PC-3 (cell line): ENCODE measurements at regions of chr20 and their contacts with region 1.

Region 1: GRCh38 chr20:45138561-45139300 is 14.5 kb upstream of the WFDC12 start:
- DNase-seq: peak; percentile 86
- ATAC-seq: peak; percentile 96
- H3K4me3 ChIP-seq: peak overlapping the region; percentile 20; the same call in 1 of the 2 replicates
- H3K27ac ChIP-seq: peak overlapping the region; percentile 27
- H3K4me1 ChIP-seq: peaks cover 19% of the 10 kb centered on the region
- H3K27me3 ChIP-seq: no peaks in the 10 kb centered on the region
- CTCF ChIP-seq: peak; percentile 99

Region 2: DNA sequence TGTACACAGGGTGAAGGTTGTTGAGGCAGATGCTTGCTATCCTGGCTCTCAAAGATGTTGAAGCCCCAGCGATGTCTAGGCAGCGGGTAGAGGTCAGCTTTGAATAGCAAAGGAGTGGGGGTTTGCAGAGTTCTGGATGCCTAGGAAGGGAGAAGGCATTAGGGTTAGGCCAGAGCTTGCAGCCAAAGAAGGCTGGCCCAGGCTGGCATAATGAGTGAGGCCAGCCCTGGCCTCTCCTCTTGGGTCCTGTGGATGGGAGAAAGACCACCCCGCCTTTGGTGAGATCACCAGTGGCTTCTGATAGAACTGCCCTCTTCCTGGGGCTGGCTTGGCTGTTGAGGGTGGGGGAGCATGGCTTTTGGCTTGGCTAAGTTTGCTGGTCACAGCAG is 23.4 kb before region 1 on chr20:
- CTCF ChIA-PET with region 1: interaction called, 13 read pairs
- POLR2A ChIA-PET with region 1: no interaction called
- intact Hi-C with region 1: no loop called
- DNase-seq: no peak
- ATAC-seq: no peak
- H3K4me3 ChIP-seq: no peak overlapping the region
- H3K27ac ChIP-seq: no peak overlapping the region
- H3K4me1 ChIP-seq: no peaks in the 10 kb centered on the region
- H3K27me3 ChIP-seq: no peaks in the 10 kb centered on the region
- CTCF ChIP-seq: no peak

Region 3: GRCh38 chr20:45124365-45124764 is 14.4 kb before region 1 on chr20 and contains the start of gene WFDC12:
- CTCF ChIA-PET with region 1: interaction called, 15 read pairs
- POLR2A ChIA-PET with region 1: interaction called, 4 read pairs
- intact Hi-C with region 1: no loop called
- DNase-seq: no peak
- ATAC-seq: no peak
- H3K4me3 ChIP-seq: no peak within 1 kb of the TSS
- H3K27ac ChIP-seq: no peak within 1 kb of the TSS
- H3K4me1 ChIP-seq: peaks cover 10% of the 10 kb centered on the region; the same call in 1 of the 2 replicates
- H3K27me3 ChIP-seq: no peaks in the 10 kb centered on the region
- CTCF ChIP-seq: no peak
- total RNA-seq, gene WFDC12: not detected in 2 replicates

Region 4: DNA sequence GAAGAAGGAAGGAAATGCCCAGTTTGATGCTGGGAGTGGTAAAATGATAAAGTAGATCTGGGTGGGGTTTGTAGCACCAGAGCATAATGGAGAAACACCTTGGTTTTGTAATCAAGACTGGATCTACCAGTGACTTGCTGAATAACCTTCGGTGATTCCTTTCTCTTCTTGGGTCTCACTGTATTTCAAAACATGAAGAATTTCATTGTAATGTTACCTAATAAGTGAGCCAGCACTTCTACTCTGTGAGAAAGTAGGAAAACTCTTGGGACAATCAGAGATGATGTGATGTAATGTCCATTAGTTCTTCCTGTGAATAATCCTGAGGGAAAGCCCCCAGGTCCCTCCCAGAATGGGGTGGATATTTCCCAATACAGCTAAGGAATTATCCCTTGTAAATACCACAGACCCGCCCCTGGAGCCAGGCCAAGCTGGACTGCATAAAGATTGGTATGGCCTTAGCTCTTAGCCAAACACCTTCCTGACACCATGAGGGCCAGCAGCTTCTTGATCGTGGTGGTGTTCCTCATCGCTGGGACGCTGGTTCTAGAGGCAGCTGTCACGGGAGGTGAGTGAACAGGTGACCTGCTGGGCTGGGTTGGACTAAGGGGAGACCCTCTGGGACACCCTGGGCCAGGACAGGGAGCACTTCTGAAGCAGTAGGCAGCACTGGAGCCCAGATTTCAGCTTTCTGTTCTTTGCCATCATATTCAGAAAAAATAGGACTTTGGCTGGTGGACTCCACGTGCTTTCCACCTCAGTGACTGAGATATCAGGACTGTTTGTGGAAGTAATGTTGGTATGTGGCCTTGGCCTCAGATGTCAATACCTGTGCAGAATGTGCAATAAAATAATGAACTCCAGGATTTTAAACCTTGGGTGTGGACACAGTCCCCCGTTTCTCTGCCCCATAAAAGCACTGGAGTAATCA is 36.0 kb after region 1 on chr20 and contains the start of gene PI3:
- CTCF ChIA-PET with region 1: interaction called, 7 read pairs
- POLR2A ChIA-PET with region 1: interaction called, 3 read pairs
- intact Hi-C with region 1: loop called (anchors 5 kb)
- DNase-seq: peak; percentile 99
- ATAC-seq: peak; percentile 66
- H3K4me3 ChIP-seq: peak within 1 kb of the TSS; percentile 8; the same call in 1 of the 2 replicates
- H3K27ac ChIP-seq: peak within 1 kb of the TSS; percentile 93
- H3K4me1 ChIP-seq: peaks cover 60% of the 10 kb centered on the region
- H3K27me3 ChIP-seq: no peaks in the 10 kb centered on the region
- CTCF ChIP-seq: no peak
- total RNA-seq, gene PI3: 175 and 188 TPM in 2 replicates

Region 5: DNA sequence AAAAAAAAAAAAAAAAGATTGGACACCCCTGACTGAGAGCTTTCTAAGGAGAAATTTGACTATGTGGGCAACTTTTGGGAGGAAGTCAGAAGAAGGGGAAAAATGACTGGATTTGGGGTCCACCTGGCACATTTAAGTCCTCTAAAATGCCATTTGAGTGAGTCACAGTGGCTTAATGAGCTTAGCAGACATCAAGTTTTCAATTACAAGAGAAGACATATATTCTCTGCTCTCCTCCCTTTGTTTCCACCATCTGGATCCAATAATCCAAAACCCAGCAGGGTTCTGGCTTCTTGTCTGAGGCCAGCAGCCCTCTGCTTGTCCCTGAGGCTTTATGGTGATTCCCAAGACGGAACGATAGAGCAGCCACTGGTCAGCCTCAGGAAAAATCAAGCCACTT is 42.9 kb after region 1 on chr20:
- CTCF ChIA-PET with region 1: interaction called, 7 read pairs
- POLR2A ChIA-PET with region 1: interaction called, 12 read pairs
- intact Hi-C with region 1: loop called (anchors 5 kb)
- DNase-seq: peak; percentile 33
- ATAC-seq: no peak
- H3K4me3 ChIP-seq: no peak overlapping the region
- H3K27ac ChIP-seq: no peak overlapping the region
- H3K4me1 ChIP-seq: peaks cover 44% of the 10 kb centered on the region
- H3K27me3 ChIP-seq: no peaks in the 10 kb centered on the region
- CTCF ChIP-seq: no peak

Region 6: DNA sequence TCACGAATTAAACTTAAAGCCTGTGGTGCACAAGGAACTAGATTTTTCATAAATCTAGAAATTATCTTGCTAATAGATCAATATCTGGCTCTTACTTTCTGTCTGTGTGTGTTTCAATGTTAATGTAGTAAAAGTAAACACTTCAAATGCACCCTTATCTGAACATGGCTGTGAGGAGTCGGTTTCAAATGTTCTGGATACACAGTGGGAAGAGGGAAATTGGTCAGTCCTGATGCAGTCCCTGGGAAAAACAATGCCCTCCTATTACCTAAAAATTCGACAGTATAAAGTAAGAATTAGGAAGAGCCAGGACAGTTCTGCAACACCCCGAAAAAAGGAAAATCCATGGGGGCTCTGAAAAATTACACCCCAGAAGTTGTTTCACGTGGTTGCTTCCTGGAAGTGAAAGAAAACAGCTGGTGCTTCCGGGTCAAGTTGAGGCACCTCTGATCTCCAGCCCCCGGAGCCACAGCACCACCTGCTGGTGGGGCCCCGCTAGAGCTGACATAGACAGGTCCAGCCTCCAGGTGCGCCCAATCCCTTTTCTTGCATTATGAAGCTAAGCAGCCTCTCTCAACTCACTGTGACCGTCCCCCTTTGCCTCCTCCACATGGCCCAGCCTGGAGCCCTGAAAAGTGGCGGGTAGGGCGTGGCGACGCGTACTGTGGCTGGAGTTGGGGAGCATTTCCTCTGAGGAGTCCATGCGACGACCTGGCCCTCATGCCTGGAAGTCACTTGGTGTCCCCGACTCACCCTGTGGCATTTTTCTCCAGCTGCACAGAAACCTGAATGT is 90.7 kb after region 1 on chr20:
- CTCF ChIA-PET with region 1: interaction called, 11 read pairs
- POLR2A ChIA-PET with region 1: no interaction called
- intact Hi-C with region 1: loop called (anchors 5 kb)
- DNase-seq: peak; percentile 91
- ATAC-seq: peak; percentile 83
- H3K4me3 ChIP-seq: peak overlapping the region; percentile 28; the same call in 1 of the 2 replicates
- H3K27ac ChIP-seq: no peak overlapping the region
- H3K4me1 ChIP-seq: 0 out of 2 replicates have a peak, but pooled peaks cover 5% of the 10 kb centered on the region
- H3K27me3 ChIP-seq: no peaks in the 10 kb centered on the region
- CTCF ChIP-seq: peak; percentile 97

Region 7: DNA sequence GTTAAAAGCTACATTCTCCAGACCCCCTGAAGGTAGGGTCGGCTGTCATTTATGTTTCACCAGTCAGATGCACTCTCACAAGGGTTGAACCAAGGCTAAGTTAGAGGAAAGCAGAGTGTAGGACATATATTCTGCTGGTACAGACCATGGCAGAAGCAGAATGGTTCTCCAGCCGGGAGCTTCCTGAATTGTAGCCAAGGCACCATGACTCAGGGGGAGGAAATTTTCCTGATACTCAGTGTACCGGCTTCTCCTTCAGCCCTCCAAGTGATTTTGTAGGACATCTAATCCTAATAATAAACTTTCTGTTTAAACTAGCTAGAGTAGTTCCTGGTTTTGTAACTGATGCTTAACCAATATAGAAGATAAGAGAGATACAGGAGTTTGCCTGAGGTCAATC is 129.8 kb after region 1 on chr20:
- CTCF ChIA-PET with region 1: no interaction called
- POLR2A ChIA-PET with region 1: no interaction called
- intact Hi-C with region 1: no loop called
- DNase-seq: peak; percentile 31
- ATAC-seq: 0 out of 2 replicates have a peak, but pooled peaks have one; percentile 27
- H3K4me3 ChIP-seq: no peak overlapping the region
- H3K27ac ChIP-seq: no peak overlapping the region
- H3K4me1 ChIP-seq: peaks cover 9% of the 10 kb centered on the region; the same call in 1 of the 2 replicates
- H3K27me3 ChIP-seq: no peaks in the 10 kb centered on the region
- CTCF ChIP-seq: no peak